Endothelial cell of umbilical vein (primary cell): ENCODE measurements at regions of chr1 and their contacts with region 1.

Region 1: GRCh38 chr1:158124999-158125398 is 55.7 kb upstream of the CD1D start:
- DNase-seq: peak; percentile 93
- H3K4me3 ChIP-seq: no peak overlapping the region
- H3K27ac ChIP-seq: no peak overlapping the region
- H3K4me1 ChIP-seq: no peaks in the 10 kb centered on the region
- H3K27me3 ChIP-seq: peaks cover 16 to 23% of the 10 kb centered on the region in 2 experiments
- CTCF ChIP-seq: peak; percentile 84 to 89
- POLR2A ChIP-seq: no peak

Region 2: DNA sequence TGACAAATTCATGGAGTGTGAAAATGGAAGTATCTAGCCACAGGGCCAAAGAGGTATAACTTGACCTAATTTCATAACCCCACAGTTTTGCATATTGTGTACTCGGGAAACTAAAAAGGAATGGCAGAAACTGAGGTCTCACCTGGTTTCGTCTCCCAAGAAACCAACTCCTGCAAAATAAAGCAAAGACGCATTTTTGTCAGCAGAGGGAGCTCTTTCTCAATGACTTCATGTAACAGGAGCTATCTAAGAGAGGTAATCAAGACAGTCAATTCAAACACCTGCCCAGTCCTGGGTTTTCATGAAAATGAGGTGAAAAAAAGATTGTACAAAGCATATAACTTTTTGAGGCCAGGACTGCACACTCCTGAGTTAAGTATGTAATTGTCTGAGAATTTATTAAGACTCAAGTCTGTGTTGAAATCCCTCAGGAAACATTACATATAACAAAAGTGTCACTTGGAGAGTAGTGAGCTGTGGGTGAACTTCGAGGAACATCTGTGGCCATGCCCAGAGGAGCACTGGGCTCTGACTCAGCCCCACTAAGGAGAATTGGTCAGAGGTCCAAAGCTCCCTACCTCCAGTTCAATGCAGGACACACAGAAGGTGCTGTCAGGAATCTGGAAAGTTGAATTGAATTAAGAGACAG is 544.7 kb before region 1 on chr1:
- CTCF ChIA-PET with region 1: interaction called, 311 read pairs
- POLR2A ChIA-PET with region 1: no interaction called
- dilution Hi-C with region 1: no loop called
- intact Hi-C with region 1: loop called (anchors 1 kb)
- DNase-seq: peak; percentile 70
- H3K4me3 ChIP-seq: no peak overlapping the region
- H3K27ac ChIP-seq: no peak overlapping the region
- H3K4me1 ChIP-seq: no peaks in the 10 kb centered on the region
- H3K27me3 ChIP-seq: peaks cover 0 to 2% of the 10 kb centered on the region in 2 experiments
- CTCF ChIP-seq: peak; percentile 59 to 63
- POLR2A ChIP-seq: no peak

Region 3: DNA sequence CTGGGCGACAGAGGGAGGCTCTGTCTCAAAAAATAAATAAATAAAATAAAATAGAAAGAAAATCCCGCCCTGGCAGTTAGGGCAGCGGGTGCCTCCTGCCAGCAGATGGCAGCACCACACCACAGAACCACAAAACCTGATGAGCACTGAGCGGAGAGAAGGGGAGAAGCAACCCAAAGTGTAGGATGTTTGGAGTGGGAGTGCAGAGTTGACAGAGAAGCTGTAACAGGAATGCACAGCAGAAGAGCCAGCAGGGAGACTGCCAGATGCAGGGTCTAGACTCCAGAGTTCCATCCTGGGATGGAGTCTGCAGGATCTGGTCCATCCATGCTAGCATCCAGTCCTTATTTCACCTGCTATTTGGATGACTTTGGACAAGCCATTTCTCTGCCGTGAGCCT is 161.3 kb before region 1 on chr1:
- CTCF ChIA-PET with region 1: interaction called, 366 read pairs
- POLR2A ChIA-PET with region 1: no interaction called
- dilution Hi-C with region 1: no loop called
- intact Hi-C with region 1: loop called (anchors 1 kb)
- DNase-seq: peak; percentile 63
- H3K4me3 ChIP-seq: no peak overlapping the region
- H3K27ac ChIP-seq: no peak overlapping the region
- H3K4me1 ChIP-seq: peaks cover 7% of the 10 kb centered on the region
- H3K27me3 ChIP-seq: peaks cover 10 to 18% of the 10 kb centered on the region in 2 experiments
- CTCF ChIP-seq: peak; percentile 76 to 78
- POLR2A ChIP-seq: no peak

Region 4: GRCh38 chr1:158087320-158087927 is 37.6 kb before region 1 on chr1:
- CTCF ChIA-PET with region 1: interaction called, 9 read pairs
- POLR2A ChIA-PET with region 1: no interaction called
- dilution Hi-C with region 1: no loop called
- intact Hi-C with region 1: loop called (anchors 1 kb)
- DNase-seq: peak; percentile 83
- H3K4me3 ChIP-seq: no peak overlapping the region
- H3K27ac ChIP-seq: no peak overlapping the region
- H3K4me1 ChIP-seq: no peaks in the 10 kb centered on the region
- H3K27me3 ChIP-seq: no peaks in the 10 kb centered on the region
- CTCF ChIP-seq: peak; percentile 96 to 99
- POLR2A ChIP-seq: no peak

Region 5: GRCh38 chr1:158998781-158999161 is 873.8 kb after region 1 on chr1:
- CTCF ChIA-PET with region 1: interaction called, 9 read pairs
- POLR2A ChIA-PET with region 1: no interaction called
- dilution Hi-C with region 1: no loop called
- intact Hi-C with region 1: loop called (anchors 1 kb)
- DNase-seq: peak; percentile 87
- H3K4me3 ChIP-seq: peak overlapping the region; percentile 36 to 78 (median 57)
- H3K27ac ChIP-seq: peak overlapping the region; percentile 85
- H3K4me1 ChIP-seq: peaks cover 26% of the 10 kb centered on the region
- H3K27me3 ChIP-seq: peaks cover 2% of the 10 kb centered on the region in 2 experiments
- CTCF ChIP-seq: peak; percentile 62 to 69
- POLR2A ChIP-seq: no peak